ENCODE measurements at regions of chr6 and their contacts with region 1.

Region 1: GRCh38 chr6:27902335-27903314 is 9.6 kb downstream of the OR2B2 start:
- DNase-seq: peak; percentile 96
- H3K4me3 Mint-ChIP-seq: peak overlapping the region; percentile 85
- H3K27ac Mint-ChIP-seq: peak overlapping the region; percentile 91
- H3K4me1 Mint-ChIP-seq: peaks cover 15% of the 10 kb centered on the region
- H3K27me3 Mint-ChIP-seq: peaks cover 22% of the 10 kb centered on the region

Region 2: DNA sequence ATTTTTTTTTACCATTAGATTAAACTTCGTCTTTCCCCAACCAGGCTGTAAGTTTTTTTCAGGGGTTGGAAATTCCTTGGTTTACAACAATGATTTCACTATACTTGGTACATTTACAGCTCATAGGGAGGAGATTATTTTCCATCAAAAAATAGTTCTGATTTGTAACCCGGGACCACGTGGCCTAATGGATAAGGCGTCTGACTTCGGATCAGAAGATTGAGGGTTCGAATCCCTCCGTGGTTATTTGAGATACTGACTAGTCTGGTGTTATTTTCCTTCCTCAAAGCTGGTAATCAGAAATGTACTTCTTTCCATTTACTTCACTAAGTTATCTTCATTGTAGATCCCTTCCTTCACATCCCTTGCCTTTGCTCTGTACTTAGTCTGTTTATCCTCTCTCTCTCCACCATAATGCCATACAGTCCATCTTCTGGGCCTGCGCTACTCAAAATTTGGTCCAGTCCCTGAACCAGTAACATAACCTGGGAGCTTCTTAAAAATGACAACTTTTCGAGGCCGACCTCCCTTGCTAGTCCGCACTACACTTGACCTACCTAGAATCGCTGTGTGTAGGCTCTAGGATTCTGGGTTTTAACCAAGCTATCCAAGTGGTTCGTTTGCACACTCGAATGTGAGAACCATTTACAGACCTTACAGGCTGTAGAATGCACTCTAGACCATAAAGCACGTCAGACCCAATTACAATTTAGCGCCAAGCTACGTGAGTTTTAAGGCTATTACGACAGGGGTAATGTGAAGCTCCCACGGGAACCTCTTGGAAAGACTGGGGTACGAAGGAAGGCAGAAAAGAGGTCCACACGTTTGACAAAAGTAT is 1579.8 kb before region 1 on chr6:
- intact Hi-C with region 1: loop called (anchors 10 kb)
- DNase-seq: peak; percentile 92
- H3K4me3 Mint-ChIP-seq: peak overlapping the region; percentile 89
- H3K27ac Mint-ChIP-seq: peak overlapping the region; percentile 93
- H3K4me1 Mint-ChIP-seq: peaks cover 37% of the 10 kb centered on the region
- H3K27me3 Mint-ChIP-seq: peaks cover 6% of the 10 kb centered on the region

Region 3: GRCh38 chr6:27687154-27688013 is 215.2 kb before region 1 on chr6:
- intact Hi-C with region 1: loop called (anchors 2 kb)
- DNase-seq: peak; percentile 92
- H3K4me3 Mint-ChIP-seq: peak overlapping the region; percentile 91
- H3K27ac Mint-ChIP-seq: peak overlapping the region; percentile 86
- H3K4me1 Mint-ChIP-seq: peaks cover 18% of the 10 kb centered on the region
- H3K27me3 Mint-ChIP-seq: peaks cover 21% of the 10 kb centered on the region

Region 4: DNA sequence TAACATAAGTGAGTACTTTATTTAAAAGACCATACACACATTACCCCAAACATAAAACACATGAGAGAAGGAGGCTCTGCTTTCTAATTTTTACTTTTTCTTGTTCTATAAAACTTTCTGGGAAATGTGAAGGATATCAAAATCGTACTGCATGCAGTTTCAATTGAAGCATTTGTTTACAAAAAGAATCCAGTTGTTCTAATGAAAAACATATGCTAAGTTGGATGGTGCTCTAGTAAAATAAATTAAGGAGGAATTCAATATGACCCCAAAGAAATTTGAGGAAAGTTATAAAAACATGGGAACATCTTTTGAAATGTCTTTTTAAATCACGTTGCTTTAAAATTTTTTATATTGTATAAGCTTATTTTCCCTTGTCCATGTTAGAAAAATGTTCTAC is 92.0 kb after region 1 on chr6:
- intact Hi-C with region 1: no loop called
- DNase-seq: no peak
- H3K4me3 Mint-ChIP-seq: no peak overlapping the region
- H3K27ac Mint-ChIP-seq: no peak overlapping the region
- H3K4me1 Mint-ChIP-seq: no peaks in the 10 kb centered on the region
- H3K27me3 Mint-ChIP-seq: peaks cover 31% of the 10 kb centered on the region

Region 5: GRCh38 chr6:28218271-28219248 is 315.9 kb after region 1 on chr6:
- intact Hi-C with region 1: loop called (anchors 10 kb)
- DNase-seq: peak; percentile 68
- H3K4me3 Mint-ChIP-seq: peak overlapping the region; percentile 82
- H3K27ac Mint-ChIP-seq: no peak overlapping the region
- H3K4me1 Mint-ChIP-seq: peaks cover 10% of the 10 kb centered on the region
- H3K27me3 Mint-ChIP-seq: peaks cover 67% of the 10 kb centered on the region

Region 6: DNA sequence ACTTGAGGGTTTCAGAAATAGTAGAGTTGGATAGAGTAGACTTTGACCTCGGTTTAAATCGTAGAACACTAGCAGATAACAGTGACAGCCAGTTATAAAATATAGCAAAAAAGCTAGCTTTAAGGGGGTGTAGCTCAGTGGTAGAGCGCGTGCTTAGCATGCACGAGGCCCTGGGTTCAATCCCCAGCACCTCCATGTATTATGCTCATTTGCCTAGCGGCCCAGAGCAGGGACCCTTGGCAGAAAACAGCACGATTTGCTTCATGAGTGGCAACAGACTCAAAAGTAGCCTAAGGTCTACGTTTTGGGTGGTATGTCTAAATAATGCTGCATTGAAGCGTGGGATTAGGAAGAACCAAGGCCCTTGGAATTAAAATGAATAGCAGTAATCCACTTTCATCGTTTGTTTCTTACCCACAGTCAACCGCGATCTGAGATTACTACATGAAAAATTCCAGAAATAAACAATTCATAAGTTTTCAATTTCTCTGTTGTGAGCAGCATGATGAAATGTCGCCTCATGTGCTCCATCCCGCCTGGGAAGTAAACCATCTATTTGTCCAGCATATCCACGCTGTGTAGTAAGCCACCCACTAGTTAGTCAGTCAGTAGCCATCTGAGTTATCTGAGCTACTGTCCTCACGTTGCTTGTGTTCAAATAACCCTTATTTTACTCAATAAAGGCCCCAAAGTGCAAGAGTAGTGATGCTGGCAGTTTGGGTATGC is 808.0 kb after region 1 on chr6:
- intact Hi-C with region 1: loop called (anchors 2 kb)
- DNase-seq: no peak
- H3K4me3 Mint-ChIP-seq: peak overlapping the region; percentile 79
- H3K27ac Mint-ChIP-seq: no peak overlapping the region
- H3K4me1 Mint-ChIP-seq: peaks cover 8% of the 10 kb centered on the region
- H3K27me3 Mint-ChIP-seq: peaks cover 31% of the 10 kb centered on the region

Region 7: DNA sequence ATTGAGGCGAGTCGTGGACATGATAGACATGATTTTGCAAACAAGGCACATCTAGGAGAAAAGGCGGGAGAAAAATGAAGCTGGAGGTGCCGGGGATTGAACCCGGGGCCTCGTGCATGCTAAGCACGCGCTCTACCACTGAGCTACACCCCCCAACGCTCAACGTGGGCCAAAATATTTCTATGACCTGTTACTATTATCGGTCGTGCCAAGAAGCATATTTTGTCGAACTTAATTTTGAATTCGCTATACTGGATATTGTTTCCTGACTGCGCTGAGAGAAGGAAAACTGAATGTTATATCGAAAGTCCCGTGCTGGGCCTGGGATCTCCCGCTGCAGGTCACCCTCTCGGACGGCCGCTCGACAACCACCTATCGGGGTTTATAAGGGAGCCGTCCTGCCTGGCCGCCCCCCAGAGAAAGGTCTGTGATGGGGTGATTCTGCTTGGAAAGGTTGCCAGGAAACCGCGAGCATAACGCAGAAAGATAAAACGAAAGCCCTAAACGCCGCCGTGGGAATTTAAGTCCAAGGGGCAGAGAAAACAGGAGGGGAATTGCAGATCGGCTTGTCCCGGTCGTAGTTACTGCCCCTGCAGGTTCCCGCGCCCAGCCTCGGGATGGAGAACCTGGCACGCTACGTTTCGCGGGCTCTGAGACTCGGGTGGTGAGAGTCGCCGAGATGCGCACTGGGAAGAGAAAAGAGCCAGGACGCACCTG is 961.1 kb after region 1 on chr6:
- intact Hi-C with region 1: loop called (anchors 2 kb)
- DNase-seq: peak; percentile 96
- H3K4me3 Mint-ChIP-seq: peak overlapping the region; percentile 95
- H3K27ac Mint-ChIP-seq: peak overlapping the region; percentile 83
- H3K4me1 Mint-ChIP-seq: peaks cover 33% of the 10 kb centered on the region
- H3K27me3 Mint-ChIP-seq: peaks cover 18% of the 10 kb centered on the region

Measured in activated CD4-positive, alpha-beta T cell treated with anti-CD3 and anti-CD28 coated beads, Interleukin-2, amount 10 ng/mL, durations not matched to agents 24 days and 14 days (primary cell).